ENCODE measurements at regions of chr1 and their contacts with region 1.

Region 1: GRCh38 chr1:77143529-77144121 is 75.6 kb downstream of the PIGK start:
- DNase-seq: no peak
- ATAC-seq: no peak
- H3K4me3 Mint-ChIP-seq: no peak overlapping the region
- H3K27ac Mint-ChIP-seq: no peak overlapping the region
- H3K4me1 Mint-ChIP-seq: peaks cover 4% of the 10 kb centered on the region
- H3K27me3 Mint-ChIP-seq: no peaks in the 10 kb centered on the region

Region 2: GRCh38 chr1:76154206-76154956 is 989.2 kb before region 1 on chr1:
- CTCF ChIA-PET with region 1: no interaction called
- POLR2A ChIA-PET with region 1: no interaction called
- intact Hi-C with region 1: loop called (anchors 1 kb)
- DNase-seq: peak; percentile 90
- ATAC-seq: peak; percentile 96
- H3K4me3 Mint-ChIP-seq: peak overlapping the region; percentile 69
- H3K27ac Mint-ChIP-seq: peak overlapping the region; percentile 86
- H3K4me1 Mint-ChIP-seq: peaks cover 7% of the 10 kb centered on the region
- H3K27me3 Mint-ChIP-seq: no peaks in the 10 kb centered on the region

Region 3: DNA sequence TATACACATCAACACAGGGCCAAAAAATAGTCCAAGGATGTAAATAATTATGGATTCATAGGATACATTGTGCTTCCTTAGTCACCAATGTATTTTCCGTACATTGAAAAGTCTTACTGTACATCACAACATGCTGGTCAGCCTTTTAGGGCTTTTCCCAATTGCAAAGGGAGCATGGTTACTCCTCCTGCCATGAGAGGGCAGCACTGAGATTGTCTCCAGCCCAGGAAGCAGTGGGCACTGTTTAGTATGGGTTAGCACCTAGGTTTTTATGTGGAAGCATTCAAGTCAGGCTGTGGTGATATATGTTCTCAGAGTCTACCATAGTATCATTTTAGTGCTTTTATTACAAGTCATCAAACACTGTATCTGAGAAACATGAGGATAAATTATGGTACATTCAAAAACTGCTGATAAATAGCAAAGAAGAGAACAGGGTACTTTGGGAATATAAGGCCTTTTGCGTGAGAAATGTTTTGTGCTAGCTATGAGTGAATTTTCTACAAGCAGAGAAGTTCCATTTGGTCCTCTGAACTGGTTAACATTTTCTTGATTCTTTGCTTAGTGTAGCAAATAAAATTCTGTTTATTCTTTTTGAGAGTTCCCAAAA is 242.4 kb before region 1 on chr1:
- CTCF ChIA-PET with region 1: no interaction called
- POLR2A ChIA-PET with region 1: no interaction called
- intact Hi-C with region 1: loop called in 1 of 2 experiments (anchors 2 kb)
- DNase-seq: peak; percentile 53
- ATAC-seq: peak; percentile 86
- H3K4me3 Mint-ChIP-seq: no peak overlapping the region
- H3K27ac Mint-ChIP-seq: no peak overlapping the region
- H3K4me1 Mint-ChIP-seq: no peaks in the 10 kb centered on the region
- H3K27me3 Mint-ChIP-seq: no peaks in the 10 kb centered on the region

Region 4: GRCh38 chr1:77438236-77438913 is 294.8 kb after region 1 on chr1:
- CTCF ChIA-PET with region 1: no interaction called
- POLR2A ChIA-PET with region 1: no interaction called
- intact Hi-C with region 1: loop called in 1 of 2 experiments (anchors 10 kb)
- DNase-seq: no peak
- ATAC-seq: no peak
- H3K4me3 Mint-ChIP-seq: peak overlapping the region; percentile 27
- H3K27ac Mint-ChIP-seq: peak overlapping the region; percentile 88
- H3K4me1 Mint-ChIP-seq: peaks cover 35% of the 10 kb centered on the region
- H3K27me3 Mint-ChIP-seq: no peaks in the 10 kb centered on the region

Region 5: GRCh38 chr1:77473690-77474089 is 330.1 kb after region 1 on chr1:
- CTCF ChIA-PET with region 1: no interaction called
- POLR2A ChIA-PET with region 1: no interaction called
- intact Hi-C with region 1: no loop called
- DNase-seq: no peak
- ATAC-seq: no peak
- H3K4me3 Mint-ChIP-seq: no peak overlapping the region
- H3K27ac Mint-ChIP-seq: no peak overlapping the region
- H3K4me1 Mint-ChIP-seq: no peaks in the 10 kb centered on the region
- H3K27me3 Mint-ChIP-seq: no peaks in the 10 kb centered on the region

Region 6: DNA sequence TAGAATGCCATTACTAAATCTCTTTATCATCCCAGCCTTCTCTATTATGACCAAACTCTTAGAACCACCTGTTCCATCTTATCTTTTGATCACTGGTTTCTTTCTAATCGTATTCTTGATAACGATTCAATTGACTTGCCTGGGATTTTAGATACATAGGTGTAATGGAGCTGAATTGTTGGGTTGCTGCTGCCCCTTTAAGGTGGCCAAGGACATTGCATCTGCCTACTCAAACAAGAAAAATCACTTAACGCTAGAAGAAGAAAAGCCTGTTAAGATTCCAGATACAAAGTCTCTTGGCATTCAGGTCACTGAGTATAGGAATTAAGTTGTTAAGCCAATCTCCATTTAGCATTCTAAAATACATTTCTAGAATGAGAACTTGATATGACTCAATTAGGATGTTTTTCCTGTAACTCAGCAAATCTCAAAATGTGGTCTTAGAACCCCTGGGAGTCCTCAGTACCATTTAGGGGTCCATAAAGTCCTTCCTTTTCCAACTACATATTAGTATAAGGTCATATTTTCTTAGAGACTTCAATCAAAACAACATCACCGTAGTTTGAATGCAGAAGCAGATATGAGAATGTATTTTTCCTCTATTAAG is 757.2 kb after region 1 on chr1:
- CTCF ChIA-PET with region 1: no interaction called
- POLR2A ChIA-PET with region 1: no interaction called
- intact Hi-C with region 1: loop called in 1 of 2 experiments (anchors 10 kb)
- DNase-seq: peak; percentile 32
- ATAC-seq: no peak
- H3K4me3 Mint-ChIP-seq: no peak overlapping the region
- H3K27ac Mint-ChIP-seq: no peak overlapping the region
- H3K4me1 Mint-ChIP-seq: no peaks in the 10 kb centered on the region
- H3K27me3 Mint-ChIP-seq: no peaks in the 10 kb centered on the region

Measured in activated CD4-positive, alpha-beta T cell treated with anti-CD3 and anti-CD28 coated beads for 36 hours (primary cell).